Esophagus squamous epithelium (tissue), 5 donors: ENCODE measurements at regions of chr7 and their contacts with region 1.

Region 1: GRCh38 chr7:121069346-121070100 is 81.0 kb downstream of the CPED1 start:
- DNase-seq: no peak
- H3K4me3 ChIP-seq: no peak overlapping the region
- H3K27ac ChIP-seq: no peak overlapping the region
- H3K4me1 ChIP-seq: peaks cover 0 to 5% (median 0%) of the 10 kb centered on the region in 3 donors
- H3K27me3 ChIP-seq: no peaks in the 10 kb centered on the region
- CTCF ChIP-seq: no peak
- POLR2A ChIP-seq: no peak

Region 2: DNA sequence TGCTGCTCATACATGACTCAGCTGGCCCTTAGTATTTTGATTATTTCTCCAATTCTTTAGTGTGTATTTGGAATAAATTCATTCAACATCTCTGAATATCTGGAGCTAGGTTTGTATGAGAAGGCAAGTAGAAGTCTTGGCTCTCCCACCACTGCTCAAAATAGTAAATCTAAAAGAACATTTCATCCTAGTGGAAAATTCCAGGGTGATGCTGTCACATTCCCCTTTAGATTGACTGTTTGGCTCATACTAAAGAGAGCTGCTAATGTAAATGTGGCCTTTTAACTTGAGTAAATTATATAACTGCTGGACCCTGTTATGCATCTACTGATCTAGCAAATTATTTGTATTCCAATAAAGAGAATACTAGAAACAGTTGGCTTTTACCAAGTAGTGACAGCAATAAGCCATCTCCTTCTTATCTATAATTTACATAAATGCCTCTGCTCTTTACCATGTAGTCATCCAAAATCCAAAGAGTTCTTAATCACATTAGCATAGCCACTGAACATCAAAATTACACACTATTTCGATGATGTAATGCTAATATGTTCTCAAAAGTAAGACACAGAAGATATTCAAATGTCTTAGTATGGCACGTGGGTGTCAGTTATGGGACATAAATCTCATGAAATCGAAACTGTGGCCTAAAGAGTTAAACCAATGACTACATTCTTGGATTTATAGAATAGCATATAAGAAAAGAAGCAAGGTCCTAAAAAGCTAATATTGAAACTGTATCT is 883.4 kb before region 1 on chr7:
- intact Hi-C with region 1: no loop called
- DNase-seq: no peak
- H3K4me3 ChIP-seq: no peak overlapping the region
- H3K27ac ChIP-seq: no peak overlapping the region
- H3K4me1 ChIP-seq: no peaks in the 10 kb centered on the region
- H3K27me3 ChIP-seq: no peaks in the 10 kb centered on the region
- CTCF ChIP-seq: no peak
- POLR2A ChIP-seq: no peak

Region 3: DNA sequence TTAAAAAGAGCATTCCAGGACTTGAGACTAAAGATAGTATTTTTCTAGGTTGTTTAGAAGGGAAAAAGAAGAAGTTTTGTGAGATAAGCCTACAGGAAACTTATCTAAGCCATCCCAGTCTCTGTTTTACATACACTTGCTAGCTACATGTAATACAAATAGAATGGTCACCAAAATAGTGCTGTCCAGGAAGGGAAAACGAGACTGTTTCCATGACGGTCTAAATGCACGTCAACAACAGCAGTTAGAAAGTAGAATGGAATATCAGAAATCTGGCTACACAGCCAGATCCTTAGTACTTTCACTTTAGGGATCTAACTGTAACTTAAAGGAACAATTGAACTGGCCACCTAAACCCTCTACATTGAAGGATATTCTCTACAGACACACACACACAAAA is 329.2 kb before region 1 on chr7:
- intact Hi-C with region 1: no loop called
- DNase-seq: no peak
- H3K4me3 ChIP-seq: peak overlapping the region in 2 of 4 donors; percentile 6 to 32
- H3K27ac ChIP-seq: no peak overlapping the region
- H3K4me1 ChIP-seq: no peaks in the 10 kb centered on the region
- H3K27me3 ChIP-seq: no peaks in the 10 kb centered on the region
- CTCF ChIP-seq: no peak
- POLR2A ChIP-seq: no peak

Region 4: DNA sequence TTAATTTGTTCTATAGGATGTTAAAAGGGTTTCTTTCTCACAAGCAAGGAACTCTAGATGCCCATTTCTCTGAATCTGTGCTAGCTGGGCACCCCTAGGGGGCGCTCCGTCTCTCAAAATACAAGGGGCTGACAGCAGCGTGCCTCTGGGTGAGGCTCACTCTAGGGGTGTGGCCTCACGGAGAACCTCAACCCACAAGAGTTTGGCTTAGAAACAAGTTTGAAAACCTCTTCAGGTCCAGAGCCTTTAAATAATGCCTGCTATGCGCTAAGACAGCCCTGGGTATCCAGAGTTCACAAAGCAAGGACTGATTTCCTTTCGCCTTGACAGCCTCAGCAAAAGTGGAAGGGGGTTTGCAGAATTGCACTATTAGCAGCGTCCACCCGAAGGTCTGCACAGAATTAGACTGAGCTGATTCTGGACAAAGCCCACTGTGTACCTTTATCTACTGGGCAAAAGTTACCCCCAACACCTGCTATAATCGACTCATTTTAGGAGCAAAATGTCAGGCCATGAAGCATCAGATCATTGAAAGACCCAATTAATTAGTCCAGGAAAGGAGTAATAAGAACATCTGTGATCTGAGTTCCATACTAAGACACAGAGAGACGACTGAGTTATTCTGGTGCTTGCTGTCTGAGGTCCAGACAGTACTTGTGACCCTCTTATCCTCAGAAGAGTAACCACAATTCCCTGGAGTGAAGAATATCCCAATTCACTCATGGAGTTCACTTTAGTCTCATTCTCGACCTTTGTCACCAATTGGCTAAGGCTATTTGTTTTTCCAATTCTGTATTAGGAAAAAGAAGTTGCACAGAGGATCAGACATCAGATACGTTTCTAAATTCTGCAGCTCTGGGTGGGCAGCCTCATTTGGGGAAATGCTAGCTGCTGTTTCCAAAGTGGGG is 81.6 kb before region 1 on chr7:
- intact Hi-C with region 1: loop called (anchors 5 kb)
- DNase-seq: peak; percentile 47
- H3K4me3 ChIP-seq: peak overlapping the region; percentile 19 to 69 (median 49)
- H3K27ac ChIP-seq: peak overlapping the region; percentile 52 to 90 (median 84)
- H3K4me1 ChIP-seq: peaks cover 0 to 36% (median 4%) of the 10 kb centered on the region in 3 donors
- H3K27me3 ChIP-seq: peaks cover 0 to 25% (median 0%) of the 10 kb centered on the region in 4 donors
- CTCF ChIP-seq: peak; percentile 84 to 93 (median 89)
- POLR2A ChIP-seq: no peak

Region 5: GRCh38 chr7:121153995-121154394 is 84.5 kb after region 1 on chr7:
- intact Hi-C with region 1: no loop called
- DNase-seq: no peak
- H3K4me3 ChIP-seq: no peak overlapping the region
- H3K27ac ChIP-seq: no peak overlapping the region
- H3K4me1 ChIP-seq: no peaks in the 10 kb centered on the region
- H3K27me3 ChIP-seq: no peaks in the 10 kb centered on the region
- CTCF ChIP-seq: no peak
- POLR2A ChIP-seq: no peak